Prostate gland (tissue), 2 donors: ENCODE measurements at regions of chr5 and their contacts with region 1.

Region 1: GRCh38 chr5:6745706-6746222 is 32.5 kb downstream of the TENT4A start:
- DNase-seq: peak; percentile 37
- H3K4me3 ChIP-seq: no peak overlapping the region
- H3K27ac ChIP-seq: no peak overlapping the region
- H3K4me1 ChIP-seq: no peaks in the 10 kb centered on the region
- H3K27me3 ChIP-seq: no peaks in the 10 kb centered on the region
- CTCF ChIP-seq: peak in 3 of 4 experiments; percentile 61 to 88 (median 80)
- POLR2A ChIP-seq: no peak

Region 2: GRCh38 chr5:6377905-6378765 is 367.6 kb before region 1 on chr5 and contains the start of gene MED10:
- intact Hi-C with region 1: loop called (anchors 10 kb)
- DNase-seq: peak; percentile 91
- H3K4me3 ChIP-seq: peak within 1 kb of the TSS; percentile 85 to 94
- H3K27ac ChIP-seq: peak within 1 kb of the TSS; percentile 77
- H3K4me1 ChIP-seq: peaks cover 9% of the 10 kb centered on the region
- H3K27me3 ChIP-seq: no peaks in the 10 kb centered on the region
- CTCF ChIP-seq: no peak
- POLR2A ChIP-seq: peak; percentile 57
- total RNA-seq, gene MED10: 19.7 to 45.3 TPM

Region 3: GRCh38 chr5:6574537-6574936 is 171.2 kb before region 1 on chr5:
- intact Hi-C with region 1: no loop called
- DNase-seq: no peak
- H3K4me3 ChIP-seq: no peak overlapping the region
- H3K27ac ChIP-seq: no peak overlapping the region
- H3K4me1 ChIP-seq: no peaks in the 10 kb centered on the region
- H3K27me3 ChIP-seq: no peaks in the 10 kb centered on the region
- CTCF ChIP-seq: no peak
- POLR2A ChIP-seq: no peak

Region 4: DNA sequence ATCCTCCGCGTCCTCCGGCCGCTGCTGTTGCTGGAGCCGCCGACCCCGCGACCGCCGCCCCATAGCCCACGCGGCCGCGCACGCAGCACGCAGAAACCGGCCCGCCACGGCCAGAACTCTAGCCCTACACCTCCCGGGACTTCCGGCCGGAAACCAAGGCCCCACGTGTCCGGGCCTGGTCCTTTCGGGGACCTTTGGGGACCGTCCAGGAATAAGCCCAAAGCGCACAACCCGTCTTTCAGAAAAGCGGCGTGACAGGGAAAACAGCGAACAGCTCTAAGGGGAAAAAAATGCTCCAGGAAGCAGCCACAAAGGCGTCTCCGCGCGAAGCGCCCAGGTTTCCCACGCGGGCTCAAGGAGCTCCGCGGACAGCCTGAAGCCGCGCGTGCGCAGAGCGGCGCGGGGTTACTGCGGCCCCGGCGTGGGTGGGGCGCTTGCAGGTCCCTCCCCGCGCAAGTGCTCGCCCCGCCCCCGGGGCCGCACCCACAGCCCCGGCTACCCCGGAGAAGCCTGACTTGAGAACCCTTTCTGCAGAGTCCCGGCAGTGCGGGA is 112.8 kb before region 1 on chr5 and contains the starts of genes NSUN2 and SRD5A1:
- intact Hi-C with region 1: loop called (anchors 1 kb)
- DNase-seq: peak; percentile 89
- H3K4me3 ChIP-seq: peak within 1 kb of the TSS; percentile 68 to 84
- H3K27ac ChIP-seq: peak within 1 kb of the TSS; percentile 88 to 93
- H3K4me1 ChIP-seq: peaks cover 7% of the 10 kb centered on the region
- H3K27me3 ChIP-seq: no peaks in the 10 kb centered on the region
- CTCF ChIP-seq: no peak
- POLR2A ChIP-seq: no peak
- total RNA-seq, gene NSUN2: 40.8 to 54.5 TPM
- total RNA-seq, gene SRD5A1: 9.4 to 29.3 TPM

Region 5: DNA sequence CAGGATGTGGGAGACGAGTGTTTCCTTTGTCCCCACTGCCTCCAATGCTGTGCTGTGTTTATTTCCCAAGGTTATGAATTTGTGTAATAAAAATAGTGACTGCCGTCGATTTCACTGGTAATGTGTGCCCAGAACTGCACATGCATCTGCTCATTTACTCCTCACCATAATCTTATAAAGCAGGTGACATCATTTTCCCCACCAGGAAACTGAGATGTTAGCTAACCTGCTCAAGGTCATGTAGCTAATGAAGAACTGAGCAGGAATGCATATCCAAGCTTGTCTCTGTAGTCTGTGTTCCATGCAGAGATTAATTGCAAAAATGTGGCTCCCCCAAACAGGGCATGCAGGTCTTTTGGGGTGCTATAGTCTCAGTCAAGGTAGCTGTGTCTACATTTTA is 191.9 kb after region 1 on chr5:
- intact Hi-C with region 1: no loop called
- DNase-seq: no peak
- H3K4me3 ChIP-seq: no peak overlapping the region
- H3K27ac ChIP-seq: no peak overlapping the region
- H3K4me1 ChIP-seq: no peaks in the 10 kb centered on the region
- H3K27me3 ChIP-seq: no peaks in the 10 kb centered on the region
- CTCF ChIP-seq: no peak
- POLR2A ChIP-seq: no peak